ENCODE measurements at regions of chr1 and their contacts with region 1.

Region 1: DNA sequence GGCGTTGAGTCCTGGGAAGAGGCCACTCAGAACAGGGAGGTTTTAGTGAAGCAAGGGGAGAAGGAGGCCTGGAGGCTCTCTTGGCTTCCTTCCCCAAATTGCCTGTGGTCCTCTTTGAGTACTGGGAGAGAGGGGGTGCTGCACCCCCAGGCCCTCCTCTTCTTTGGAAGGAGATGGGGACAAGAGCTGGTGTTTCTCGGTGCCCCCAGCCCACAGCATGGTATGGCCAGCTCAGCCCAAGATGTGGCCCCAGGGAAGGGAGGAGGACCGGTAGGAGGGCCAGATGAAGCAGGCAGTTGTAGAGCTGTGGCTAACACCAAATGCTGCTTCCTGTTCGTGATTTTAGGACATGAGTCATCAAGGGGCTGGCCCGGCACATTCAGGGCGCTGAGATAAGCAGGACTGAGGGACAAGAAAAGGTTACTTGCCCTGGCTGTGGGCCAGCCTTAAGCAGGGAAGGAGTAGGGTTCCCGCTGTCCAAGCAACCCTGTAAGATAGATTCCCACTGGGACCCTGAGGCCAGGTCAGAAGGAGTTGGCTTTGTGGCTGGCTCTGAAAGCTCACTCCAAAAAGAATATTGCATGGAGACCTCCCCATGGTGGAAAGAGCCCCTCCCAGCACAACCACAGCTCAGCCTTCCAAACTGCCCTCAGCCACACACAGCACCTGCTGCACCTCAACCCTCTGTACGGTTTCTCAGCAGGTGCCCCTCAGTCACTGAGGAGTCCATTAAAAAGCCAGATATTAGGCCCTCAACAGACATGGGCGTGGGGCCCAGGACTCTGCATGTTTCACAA is 4.9 kb upstream of the TNFRSF1B start:
- DNase-seq: peak; percentile 55
- ATAC-seq: peak; percentile 78
- H3K4me3 Mint-ChIP-seq: peak overlapping the region; percentile 63
- H3K27ac Mint-ChIP-seq: peak overlapping the region; percentile 91
- H3K4me1 Mint-ChIP-seq: peaks cover 74% of the 10 kb centered on the region
- H3K27me3 Mint-ChIP-seq: no peaks in the 10 kb centered on the region
- CTCF ChIP-seq: no peak

Region 2: DNA sequence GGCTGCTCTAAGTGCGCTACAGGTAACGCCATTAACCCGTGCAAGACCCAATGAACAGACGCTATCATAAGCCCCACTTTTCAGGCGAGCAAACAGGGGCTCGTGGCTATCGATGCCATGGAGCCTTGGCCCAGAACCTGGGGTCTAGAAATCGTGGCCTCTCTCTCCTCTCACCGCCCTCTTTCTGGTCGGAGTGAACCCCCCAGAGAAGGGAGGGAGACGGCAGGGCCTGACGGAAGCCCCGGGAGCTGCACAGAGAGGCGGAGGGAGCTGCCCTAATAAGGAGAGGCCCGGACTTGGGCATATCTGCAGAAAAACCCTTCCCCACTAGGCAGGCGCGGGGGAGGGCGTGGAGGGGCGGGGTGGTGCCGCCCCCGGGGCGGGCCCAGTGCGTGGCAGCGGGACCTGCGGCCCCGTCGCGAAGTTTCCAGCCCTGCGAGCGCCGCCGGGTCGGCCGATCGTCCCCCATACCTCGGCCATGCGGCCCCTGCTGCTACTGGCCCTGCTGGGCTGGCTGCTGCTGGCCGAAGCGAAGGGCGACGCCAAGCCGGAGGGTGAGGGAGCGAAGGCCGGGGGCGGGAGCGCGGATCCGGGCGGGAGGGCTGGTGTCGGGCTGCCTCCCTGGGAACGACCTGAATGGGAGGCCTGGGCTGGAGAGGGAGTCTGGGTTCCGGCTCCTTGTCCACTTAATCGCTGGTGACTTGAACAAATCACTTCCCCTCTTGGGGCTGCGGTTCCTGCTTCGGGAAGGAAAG is 227.4 kb before region 1 on chr1 and contains the start of gene PLOD1:
- CTCF ChIA-PET with region 1: no interaction called
- POLR2A ChIA-PET with region 1: no interaction called
- intact Hi-C with region 1: no loop called
- DNase-seq: peak; percentile 76
- ATAC-seq: peak; percentile 99
- H3K4me3 Mint-ChIP-seq: peak within 1 kb of the TSS; percentile 86
- H3K27ac Mint-ChIP-seq: peak within 1 kb of the TSS; percentile 59
- H3K4me1 Mint-ChIP-seq: peaks cover 7% of the 10 kb centered on the region
- H3K27me3 Mint-ChIP-seq: no peaks in the 10 kb centered on the region
- CTCF ChIP-seq: no peak
- total RNA-seq, gene PLOD1: 15.7 and 18.6 TPM in 2 replicates

Region 3: DNA sequence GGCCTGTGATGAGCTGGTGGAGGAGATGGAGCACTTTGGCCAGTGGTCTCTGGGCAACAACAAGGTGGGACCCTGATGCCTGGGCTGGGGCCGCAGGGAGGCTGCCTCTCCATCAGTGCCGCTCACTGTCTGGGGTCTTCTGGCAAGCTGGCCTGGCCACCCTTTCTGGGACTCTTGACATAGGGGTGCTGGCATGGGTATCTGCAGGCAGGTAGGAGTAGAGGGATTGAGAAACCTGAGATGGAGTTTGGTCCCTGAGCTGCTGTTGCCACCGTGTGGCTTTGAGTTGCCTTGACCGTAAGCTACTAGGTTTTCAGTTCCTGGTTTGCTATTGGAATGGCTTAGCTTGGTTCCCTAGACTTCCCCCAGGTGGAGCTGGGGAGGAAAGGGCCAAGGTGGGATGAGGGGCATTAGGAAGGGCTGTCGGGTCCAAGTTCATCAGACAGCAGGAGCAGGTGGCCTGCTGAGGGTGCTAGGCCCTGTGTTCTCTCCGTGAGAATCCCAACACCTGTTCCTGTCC is 194.8 kb before region 1 on chr1:
- CTCF ChIA-PET with region 1: no interaction called
- POLR2A ChIA-PET with region 1: no interaction called
- intact Hi-C with region 1: no loop called
- DNase-seq: no peak
- ATAC-seq: peak; percentile 75
- H3K4me3 Mint-ChIP-seq: no peak overlapping the region
- H3K27ac Mint-ChIP-seq: no peak overlapping the region
- H3K4me1 Mint-ChIP-seq: no peaks in the 10 kb centered on the region
- H3K27me3 Mint-ChIP-seq: no peaks in the 10 kb centered on the region
- CTCF ChIP-seq: no peak

Region 4: GRCh38 chr1:12132092-12132491 is 29.8 kb before region 1 on chr1:
- CTCF ChIA-PET with region 1: interaction called, 3 read pairs
- POLR2A ChIA-PET with region 1: interaction called, 34 read pairs
- intact Hi-C with region 1: no loop called
- DNase-seq: no peak
- ATAC-seq: no peak
- H3K4me3 Mint-ChIP-seq: no peak overlapping the region
- H3K27ac Mint-ChIP-seq: peak overlapping the region; percentile 85
- H3K4me1 Mint-ChIP-seq: peaks cover 35% of the 10 kb centered on the region
- H3K27me3 Mint-ChIP-seq: no peaks in the 10 kb centered on the region
- CTCF ChIP-seq: no peak

Measured in activated B cell treated with CpG ODN at 0.5 μM for 24 hours (primary cell).